Right ventricle myocardium inferior (tissue), 1 donor: ENCODE measurements at regions of chr3 and their contacts with region 1.

Region 1: GRCh38 chr3:42749753-42750231 is 23.3 kb downstream of the CCDC13 start:
- DNase-seq: no peak
- ATAC-seq: peak; percentile 17

Region 2: DNA sequence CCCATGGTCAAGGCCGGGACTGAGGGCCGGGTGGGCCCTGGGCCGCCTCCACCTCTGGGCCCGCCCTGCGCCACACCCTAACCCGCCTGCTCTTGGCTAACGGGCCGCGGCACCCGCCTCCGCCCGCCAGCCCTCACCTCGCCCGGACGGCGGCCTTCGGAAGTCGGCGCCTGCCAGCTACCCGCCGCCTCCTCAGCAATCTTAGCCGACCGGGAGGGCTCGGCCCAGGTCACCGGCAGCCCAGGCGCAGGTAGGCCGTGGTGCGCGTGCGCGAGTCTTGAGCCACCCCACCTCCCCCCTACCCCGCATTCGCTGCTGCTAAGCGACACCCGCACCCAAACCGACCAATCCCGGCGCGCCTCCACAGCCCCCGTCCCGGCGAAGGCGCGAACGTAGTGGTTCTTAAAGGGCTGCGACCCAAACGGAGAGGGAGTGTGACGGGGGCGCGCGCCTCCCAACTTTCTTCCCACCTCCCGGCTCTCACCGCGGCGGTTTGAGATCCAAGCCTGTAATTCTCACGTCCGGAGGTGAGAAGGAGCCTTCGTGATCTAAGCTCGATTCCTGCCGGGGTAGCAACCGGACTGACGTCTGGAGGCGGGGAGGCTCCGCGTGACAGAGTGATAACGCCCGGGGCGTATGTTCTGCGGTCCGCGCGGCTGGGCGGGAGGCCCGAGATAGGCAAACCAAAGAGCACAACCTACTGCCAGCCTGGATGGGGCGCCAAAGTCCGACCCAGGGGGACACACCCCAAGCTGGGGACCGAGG is 167.9 kb before region 1 on chr3 and contains the start of gene SEC22C:
- intact Hi-C with region 1: loop called (anchors 2 kb)
- DNase-seq: peak; percentile 98
- ATAC-seq: peak; percentile 98
- total RNA-seq, gene SEC22C: 23.9 TPM

Region 3: GRCh38 chr3:42652611-42653302 is 97.0 kb before region 1 on chr3:
- intact Hi-C with region 1: loop called (anchors 2 kb)
- DNase-seq: peak; percentile 89
- ATAC-seq: peak; percentile 33

Region 4: GRCh38 chr3:42780892-42781700 is 31.3 kb after region 1 on chr3:
- intact Hi-C with region 1: no loop called
- DNase-seq: no peak
- ATAC-seq: peak; percentile 64